ENCODE measurements at regions of chr16 and their contacts with region 1.

Region 1: GRCh38 chr16:52191531-52192134 is 355.3 kb downstream of the TOX3 start:
- ATAC-seq: peak; percentile 40 to 70 (median 60)
- H3K4me3 ChIP-seq: no peak overlapping the region
- H3K27ac ChIP-seq: no peak overlapping the region
- H3K4me1 ChIP-seq: no peaks in the 10 kb centered on the region

Region 2: GRCh38 chr16:51982715-51983680 is 208.6 kb before region 1 on chr16:
- in situ Hi-C with region 1: no loop called
- ATAC-seq: peak; percentile 6 to 73 (median 64)
- H3K4me3 ChIP-seq: no peak overlapping the region
- H3K27ac ChIP-seq: no peak overlapping the region
- H3K4me1 ChIP-seq: peaks cover 0 to 5% of the 10 kb centered on the region in 2 donors

Region 3: GRCh38 chr16:52573365-52574299 is 382.0 kb after region 1 on chr16:
- in situ Hi-C with region 1: loop called in 1 of 9 experiments (anchors 25 kb)
- ATAC-seq: no peak
- H3K4me3 ChIP-seq: no peak overlapping the region
- H3K27ac ChIP-seq: no peak overlapping the region
- H3K4me1 ChIP-seq: peaks cover 18 to 23% of the 10 kb centered on the region in 2 donors

Region 4: GRCh38 chr16:52861614-52862022 is 670.0 kb after region 1 on chr16:
- in situ Hi-C with region 1: loop called in 5 of 9 experiments (anchors 25 kb)
- ATAC-seq: peak in 2 of 8 experiments; percentile 48 to 52
- H3K4me3 ChIP-seq: no peak overlapping the region
- H3K27ac ChIP-seq: no peak overlapping the region
- H3K4me1 ChIP-seq: no peaks in the 10 kb centered on the region

Region 5: DNA sequence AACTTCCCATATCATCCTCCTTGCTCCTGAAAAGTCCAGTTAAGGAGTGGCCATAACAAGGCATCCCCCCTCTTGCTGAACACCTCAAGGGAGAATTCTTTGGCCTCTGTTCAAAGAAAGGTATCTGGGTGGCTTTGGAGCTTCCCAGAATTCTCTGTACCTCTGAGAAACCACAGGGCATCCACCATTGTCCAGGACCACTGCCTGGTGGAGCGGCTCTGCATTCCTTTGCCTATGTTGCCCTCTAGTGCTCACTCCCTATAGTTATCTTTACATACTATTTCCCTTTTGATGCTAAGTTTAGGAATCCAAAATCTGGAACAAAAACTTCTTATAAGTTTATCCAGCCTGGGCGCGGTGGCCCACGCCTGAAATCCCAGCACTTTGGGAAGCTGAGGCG is 830.7 kb after region 1 on chr16:
- in situ Hi-C with region 1: loop called in 3 of 9 experiments (anchors 25 kb)
- ATAC-seq: peak; percentile 76 to 98 (median 88)
- H3K4me3 ChIP-seq: no peak overlapping the region
- H3K27ac ChIP-seq: no peak overlapping the region
- H3K4me1 ChIP-seq: no peaks in the 10 kb centered on the region